ENCODE measurements at regions of chr1 and their contacts with region 1.

Region 1: DNA sequence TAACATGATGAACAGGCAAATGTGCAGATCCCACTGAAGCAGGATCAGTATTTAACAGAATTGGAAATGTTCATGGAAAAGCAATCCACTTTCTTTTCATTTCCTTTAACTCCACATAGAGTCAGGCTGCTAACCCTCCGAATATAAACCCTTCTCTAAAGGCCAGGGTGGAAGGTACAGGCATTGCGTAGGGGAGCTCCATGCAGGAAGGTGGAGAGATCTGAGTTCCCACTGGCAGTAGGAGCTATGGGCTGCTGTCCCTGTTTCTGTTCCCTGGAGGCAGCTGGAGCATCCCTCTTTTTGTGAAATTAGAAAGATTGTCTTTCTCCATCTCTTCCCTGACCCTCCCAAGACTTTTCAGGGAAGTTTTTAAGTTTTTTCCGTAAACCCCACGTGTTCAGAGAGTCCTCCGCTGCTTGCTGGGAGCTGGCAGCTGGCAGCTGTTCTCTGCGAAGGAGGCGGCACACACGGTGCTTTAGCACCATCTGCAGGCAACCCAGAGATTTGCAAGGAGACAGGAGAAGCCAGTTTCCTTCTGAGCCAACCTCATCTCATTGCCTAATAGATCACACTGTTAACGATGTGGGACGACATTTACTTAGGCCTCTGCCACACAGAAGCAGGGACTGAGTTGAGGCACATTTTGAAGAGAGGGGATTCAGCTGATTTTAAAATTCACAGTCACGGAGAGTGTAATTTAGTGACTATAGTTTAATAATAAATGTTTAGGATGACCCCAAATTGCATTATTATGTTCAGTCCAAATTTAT is 55.4 kb upstream of the HOOK1 start:
- DNase-seq: peak; percentile 77
- ATAC-seq: peak; percentile 87
- H3K4me3 ChIP-seq: no peak overlapping the region
- H3K4me3 Mint-ChIP-seq: peak overlapping the region; percentile 40
- H3K27ac ChIP-seq: no peak overlapping the region
- H3K27ac Mint-ChIP-seq: no peak overlapping the region
- H3K4me1 ChIP-seq: peaks cover 0 to 7% of the 10 kb centered on the region in 2 donors
- H3K4me1 Mint-ChIP-seq: peaks cover 9% of the 10 kb centered on the region
- H3K27me3 ChIP-seq: no peaks in the 10 kb centered on the region
- H3K27me3 Mint-ChIP-seq: no peaks in the 10 kb centered on the region
- CTCF ChIP-seq: peak; percentile 94

Region 2: GRCh38 chr1:58515794-58516401 is 1243.4 kb before region 1 on chr1:
- CTCF ChIA-PET with region 1: interaction called, 44 read pairs
- POLR2A ChIA-PET with region 1: no interaction called
- intact Hi-C with region 1: no loop called
- DNase-seq: peak; percentile 76
- ATAC-seq: peak; percentile 51
- H3K4me3 ChIP-seq: no peak overlapping the region
- H3K4me3 Mint-ChIP-seq: no peak overlapping the region
- H3K27ac ChIP-seq: peak overlapping the region in 1 of 2 donors; percentile 9
- H3K27ac Mint-ChIP-seq: peak overlapping the region; percentile 46
- H3K4me1 ChIP-seq: no peaks in the 10 kb centered on the region
- H3K4me1 Mint-ChIP-seq: no peaks in the 10 kb centered on the region
- H3K27me3 ChIP-seq: no peaks in the 10 kb centered on the region
- H3K27me3 Mint-ChIP-seq: no peaks in the 10 kb centered on the region
- CTCF ChIP-seq: peak; percentile 90

Region 3: DNA sequence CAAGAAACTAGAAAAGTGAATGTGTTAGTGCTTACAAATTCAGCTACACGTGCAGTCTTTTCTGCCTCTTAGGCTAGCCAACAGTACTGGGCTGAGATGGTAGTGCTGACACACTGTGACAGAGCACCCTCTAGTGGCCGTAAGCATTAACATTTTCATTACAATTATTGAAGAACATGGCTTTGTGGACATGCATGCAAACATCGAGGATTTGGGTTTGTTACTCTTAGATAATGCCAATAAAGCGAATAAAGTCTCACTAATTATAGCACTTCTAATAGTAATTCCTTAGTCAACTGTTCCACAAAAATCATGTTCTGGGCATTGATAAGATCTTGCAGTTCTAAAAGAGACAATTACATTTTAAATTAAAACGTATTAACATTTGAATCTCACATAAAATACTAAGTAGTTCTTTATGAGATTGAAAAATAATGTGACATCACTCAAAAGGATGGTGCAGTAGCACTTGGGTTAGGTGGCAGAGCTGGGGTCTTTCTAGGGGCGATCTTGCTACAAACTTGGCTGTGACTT is 1106.6 kb before region 1 on chr1:
- CTCF ChIA-PET with region 1: interaction called, 15 read pairs
- POLR2A ChIA-PET with region 1: no interaction called
- intact Hi-C with region 1: loop called (anchors 1 kb)
- DNase-seq: peak; percentile 75
- ATAC-seq: peak; percentile 81
- H3K4me3 ChIP-seq: no peak overlapping the region
- H3K4me3 Mint-ChIP-seq: no peak overlapping the region
- H3K27ac ChIP-seq: no peak overlapping the region
- H3K27ac Mint-ChIP-seq: no peak overlapping the region
- H3K4me1 ChIP-seq: no peaks in the 10 kb centered on the region
- H3K4me1 Mint-ChIP-seq: peaks cover 4% of the 10 kb centered on the region
- H3K27me3 ChIP-seq: no peaks in the 10 kb centered on the region
- H3K27me3 Mint-ChIP-seq: no peaks in the 10 kb centered on the region
- CTCF ChIP-seq: peak; percentile 90

Region 4: GRCh38 chr1:58664881-58665280 is 1094.5 kb before region 1 on chr1:
- CTCF ChIA-PET with region 1: interaction called, 11 read pairs
- POLR2A ChIA-PET with region 1: no interaction called
- intact Hi-C with region 1: no loop called
- DNase-seq: no peak
- ATAC-seq: no peak
- H3K4me3 ChIP-seq: no peak overlapping the region
- H3K4me3 Mint-ChIP-seq: no peak overlapping the region
- H3K27ac ChIP-seq: no peak overlapping the region
- H3K27ac Mint-ChIP-seq: no peak overlapping the region
- H3K4me1 ChIP-seq: no peaks in the 10 kb centered on the region
- H3K4me1 Mint-ChIP-seq: no peaks in the 10 kb centered on the region
- H3K27me3 ChIP-seq: no peaks in the 10 kb centered on the region
- H3K27me3 Mint-ChIP-seq: no peaks in the 10 kb centered on the region
- CTCF ChIP-seq: no peak

Region 5: DNA sequence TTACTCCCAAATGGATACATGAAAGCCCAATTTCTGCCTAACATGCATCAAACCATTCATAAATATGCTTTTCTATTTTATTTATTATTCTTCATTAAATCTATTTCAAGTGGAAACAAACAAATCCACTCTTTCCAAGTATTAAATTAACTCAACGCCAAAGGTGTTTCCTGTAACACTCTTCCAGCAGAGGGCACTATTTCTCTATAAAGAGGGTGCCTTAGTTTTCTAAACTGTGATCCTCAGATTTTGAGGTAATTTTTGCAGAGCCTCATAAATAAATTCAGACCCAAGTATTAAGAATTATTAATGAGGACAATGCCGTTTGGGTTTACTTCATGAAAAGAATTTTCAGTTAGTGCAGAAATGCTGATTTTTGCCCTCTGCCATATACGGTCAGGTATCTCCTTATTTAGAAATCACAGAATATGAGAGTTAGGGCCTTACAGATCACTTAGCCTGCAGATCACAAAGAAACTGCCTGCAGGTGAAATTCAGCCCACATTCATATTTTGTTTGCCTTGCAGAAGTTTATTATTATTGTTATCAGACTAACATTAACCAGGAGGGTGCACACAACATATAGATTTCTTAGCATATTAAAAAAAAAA is 1019.4 kb before region 1 on chr1:
- CTCF ChIA-PET with region 1: interaction called, 96 read pairs
- POLR2A ChIA-PET with region 1: interaction called, 6 read pairs
- intact Hi-C with region 1: loop called (anchors 1 kb)
- DNase-seq: peak; percentile 75
- ATAC-seq: peak; percentile 61
- H3K4me3 ChIP-seq: no peak overlapping the region
- H3K4me3 Mint-ChIP-seq: no peak overlapping the region
- H3K27ac ChIP-seq: no peak overlapping the region
- H3K27ac Mint-ChIP-seq: no peak overlapping the region
- H3K4me1 ChIP-seq: no peaks in the 10 kb centered on the region
- H3K4me1 Mint-ChIP-seq: no peaks in the 10 kb centered on the region
- H3K27me3 ChIP-seq: no peaks in the 10 kb centered on the region
- H3K27me3 Mint-ChIP-seq: peaks cover 12% of the 10 kb centered on the region
- CTCF ChIP-seq: peak; percentile 98

Region 6: GRCh38 chr1:59146651-59147358 is 612.5 kb before region 1 on chr1:
- CTCF ChIA-PET with region 1: no interaction called
- POLR2A ChIA-PET with region 1: no interaction called
- intact Hi-C with region 1: loop called (anchors 5 kb)
- DNase-seq: peak; percentile 78
- ATAC-seq: peak; percentile 85
- H3K4me3 ChIP-seq: peak overlapping the region; percentile 31 to 69 (median 58)
- H3K4me3 Mint-ChIP-seq: peak overlapping the region; percentile 94
- H3K27ac ChIP-seq: peak overlapping the region; percentile 49 to 72
- H3K27ac Mint-ChIP-seq: peak overlapping the region; percentile 88
- H3K4me1 ChIP-seq: peaks cover 16 to 28% of the 10 kb centered on the region in 2 donors
- H3K4me1 Mint-ChIP-seq: peaks cover 32% of the 10 kb centered on the region
- H3K27me3 ChIP-seq: no peaks in the 10 kb centered on the region
- H3K27me3 Mint-ChIP-seq: no peaks in the 10 kb centered on the region
- CTCF ChIP-seq: peak; percentile 45

Region 7: DNA sequence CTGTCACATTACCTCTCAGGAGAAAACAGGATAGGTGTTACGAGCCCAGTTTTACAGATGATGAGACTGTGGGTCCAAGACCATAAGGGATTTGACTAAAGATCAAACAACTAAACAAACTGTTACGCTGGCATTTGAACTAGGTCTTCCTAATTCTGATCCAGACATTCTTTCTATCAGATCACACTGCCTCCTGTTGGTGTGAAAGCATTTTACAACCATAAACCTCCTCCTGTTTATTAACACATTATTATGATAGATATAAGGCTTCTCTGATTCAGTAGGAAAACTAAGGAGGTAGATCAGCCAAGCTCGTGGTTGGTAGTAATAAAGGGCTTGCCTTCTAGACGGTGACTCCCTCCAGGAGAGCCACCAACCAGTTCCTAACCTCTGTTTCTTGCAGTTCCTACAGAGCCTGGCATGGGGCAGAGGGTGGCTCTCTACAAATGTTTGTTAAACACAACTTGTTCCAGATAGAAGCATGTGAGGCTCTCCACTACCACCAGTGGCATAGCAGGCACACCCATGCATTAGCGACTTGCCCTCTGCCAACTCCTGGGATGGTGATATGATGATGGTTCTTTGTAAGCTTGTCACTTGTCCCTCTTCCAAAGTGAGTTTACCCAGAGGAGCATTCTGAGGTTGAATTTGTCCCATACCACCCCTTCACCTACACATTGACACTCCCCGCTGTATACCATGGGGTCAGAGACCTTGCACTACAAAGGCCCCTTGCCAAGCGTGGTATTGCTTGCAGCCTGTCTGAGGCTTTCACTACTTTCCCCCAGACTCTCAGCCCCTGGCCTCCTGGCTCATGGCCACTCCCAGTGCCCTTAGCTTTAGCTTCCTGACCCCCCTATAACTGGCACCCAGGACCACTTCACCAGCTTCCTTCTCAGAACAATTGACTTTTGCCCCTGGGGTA is 41.0 kb before region 1 on chr1:
- CTCF ChIA-PET with region 1: no interaction called
- POLR2A ChIA-PET with region 1: no interaction called
- intact Hi-C with region 1: no loop called
- DNase-seq: peak; percentile 10
- ATAC-seq: no peak
- H3K4me3 ChIP-seq: no peak overlapping the region
- H3K4me3 Mint-ChIP-seq: no peak overlapping the region
- H3K27ac ChIP-seq: no peak overlapping the region
- H3K27ac Mint-ChIP-seq: no peak overlapping the region
- H3K4me1 ChIP-seq: no peaks in the 10 kb centered on the region
- H3K4me1 Mint-ChIP-seq: no peaks in the 10 kb centered on the region
- H3K27me3 ChIP-seq: no peaks in the 10 kb centered on the region
- H3K27me3 Mint-ChIP-seq: no peaks in the 10 kb centered on the region
- CTCF ChIP-seq: no peak

Region 8: GRCh38 chr1:59926381-59927123 is 167.2 kb after region 1 on chr1 and contains the start of gene CYP2J2:
- CTCF ChIA-PET with region 1: no interaction called
- POLR2A ChIA-PET with region 1: no interaction called
- intact Hi-C with region 1: no loop called
- DNase-seq: peak; percentile 30
- ATAC-seq: peak; percentile 68
- H3K4me3 ChIP-seq: peak within 1 kb of the TSS; percentile 46 to 86 (median 71)
- H3K4me3 Mint-ChIP-seq: peak within 1 kb of the TSS; percentile 95
- H3K27ac ChIP-seq: peak within 1 kb of the TSS in 1 of 2 donors; percentile 55
- H3K27ac Mint-ChIP-seq: peak within 1 kb of the TSS; percentile 47
- H3K4me1 ChIP-seq: peaks cover 10% of the 10 kb centered on the region in 2 donors
- H3K4me1 Mint-ChIP-seq: peaks cover 17% of the 10 kb centered on the region
- H3K27me3 ChIP-seq: peaks cover 0 to 15% (median 5%) of the 10 kb centered on the region in 4 experiments
- H3K27me3 Mint-ChIP-seq: peaks cover 31% of the 10 kb centered on the region
- CTCF ChIP-seq: no peak
- total RNA-seq, gene CYP2J2: 0.34 and 0.41 TPM in 2 replicates

Region 9: DNA sequence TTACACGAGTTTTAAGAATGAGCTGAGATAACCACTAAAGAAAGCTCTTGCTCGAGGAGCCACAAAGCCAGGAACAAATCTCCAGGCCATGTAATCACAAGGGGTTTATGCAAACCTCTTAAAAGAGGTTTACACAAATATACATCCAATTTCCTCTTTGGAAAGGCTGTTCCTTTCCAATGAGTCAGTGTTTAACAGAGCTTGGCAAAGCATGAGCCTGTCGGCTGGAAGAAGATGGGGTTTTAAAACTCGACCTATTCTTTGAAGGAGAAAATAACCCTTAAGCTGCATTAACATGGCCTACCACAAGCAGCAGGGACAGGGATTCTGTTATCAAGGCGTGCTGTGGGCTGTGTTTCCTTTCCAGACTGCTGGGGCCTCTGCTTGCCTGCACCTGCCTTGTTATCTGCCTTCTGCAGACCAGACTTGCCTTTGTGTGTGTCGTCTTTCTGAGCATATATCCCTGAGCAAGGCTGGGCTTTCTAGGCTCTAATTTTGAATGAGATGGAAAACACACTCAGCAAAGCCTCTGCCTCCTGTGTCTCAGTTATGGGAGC is 207.9 kb after region 1 on chr1:
- CTCF ChIA-PET with region 1: no interaction called
- POLR2A ChIA-PET with region 1: no interaction called
- intact Hi-C with region 1: no loop called
- DNase-seq: no peak
- ATAC-seq: no peak
- H3K4me3 ChIP-seq: no peak overlapping the region
- H3K4me3 Mint-ChIP-seq: no peak overlapping the region
- H3K27ac ChIP-seq: no peak overlapping the region
- H3K27ac Mint-ChIP-seq: no peak overlapping the region
- H3K4me1 ChIP-seq: peaks cover 3 to 5% of the 10 kb centered on the region in 2 donors
- H3K4me1 Mint-ChIP-seq: peaks cover 5% of the 10 kb centered on the region
- H3K27me3 ChIP-seq: no peaks in the 10 kb centered on the region
- H3K27me3 Mint-ChIP-seq: peaks cover 5% of the 10 kb centered on the region
- CTCF ChIP-seq: no peak